ENCODE measurements at regions of chr19 and their contacts with region 1.

Region 1: GRCh38 chr19:43675269-43675879 is 5.4 kb upstream of the PLAUR start:
- DNase-seq: no peak

Region 2: DNA sequence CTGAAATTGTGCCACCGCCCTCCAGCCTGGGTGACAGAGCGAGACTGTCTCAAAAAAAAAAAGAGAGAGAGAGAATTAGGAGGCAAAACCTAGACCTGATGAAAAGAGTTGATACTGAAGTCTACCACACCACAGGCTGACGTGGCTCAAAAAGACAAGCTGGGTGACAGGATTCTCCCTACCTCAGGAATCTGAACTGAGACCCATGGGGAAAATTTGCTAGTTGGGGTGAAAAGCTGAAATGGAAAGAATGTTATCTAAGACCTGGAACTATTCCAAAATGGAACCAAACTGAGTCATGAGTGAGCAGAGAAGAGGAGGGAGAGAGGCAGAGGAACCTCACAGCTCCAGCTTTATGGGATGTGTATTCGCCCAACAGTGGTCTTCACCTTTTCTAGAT is 67.6 kb after region 1 on chr19:
- intact Hi-C with region 1: loop called (anchors 10 kb)
- DNase-seq: no peak

Measured in cardiac septum (tissue), 1 donor.